HepG2 (cell line): ENCODE measurements at regions of chr1 and their contacts with region 1.

Region 1: GRCh38 chr1:31523769-31524168 is 52.5 kb upstream of the TINAGL1 start:
- DNase-seq: peak; percentile 32
- ATAC-seq: peak; percentile 87
- H3K4me3 ChIP-seq: peak overlapping the region in 1 of 3 experiments; percentile 20; a peak in 2 of 6 replicates
- H3K27ac ChIP-seq: peak overlapping the region; percentile 69
- H3K4me1 ChIP-seq: peaks cover 31% of the 10 kb centered on the region
- H3K27me3 ChIP-seq: no peaks in the 10 kb centered on the region
- CTCF ChIP-seq: no peak
- EP300 ChIP-seq: no peak; a peak in 1 of 4 replicates
- POLR2A ChIP-seq: no peak
- RAD21 ChIP-seq: no peak

Region 2: GRCh38 chr1:31505911-31506497 is 17.8 kb before region 1 on chr1:
- CTCF ChIA-PET with region 1: no interaction called
- POLR2A ChIA-PET with region 1: interaction called, 21 read pairs
- in situ Hi-C with region 1: no loop called
- intact Hi-C with region 1: no loop called
- DNase-seq: no peak
- ATAC-seq: no peak
- H3K4me3 ChIP-seq: no peak overlapping the region
- H3K27ac ChIP-seq: no peak overlapping the region
- H3K4me1 ChIP-seq: peaks cover 70% of the 10 kb centered on the region
- H3K27me3 ChIP-seq: no peaks in the 10 kb centered on the region
- CTCF ChIP-seq: no peak
- EP300 ChIP-seq: no peak
- POLR2A ChIP-seq: no peak
- RAD21 ChIP-seq: no peak

Region 3: GRCh38 chr1:31510841-31511803 is 12.6 kb before region 1 on chr1:
- CTCF ChIA-PET with region 1: no interaction called
- POLR2A ChIA-PET with region 1: interaction called, 21 read pairs
- in situ Hi-C with region 1: no loop called
- intact Hi-C with region 1: no loop called
- DNase-seq: peak; percentile 52
- ATAC-seq: peak; percentile 52
- H3K4me3 ChIP-seq: peak overlapping the region in 1 of 3 experiments; percentile 44; a peak in 2 of 6 replicates
- H3K27ac ChIP-seq: peak overlapping the region; percentile 98
- H3K4me1 ChIP-seq: peaks cover 97% of the 10 kb centered on the region
- H3K27me3 ChIP-seq: no peaks in the 10 kb centered on the region
- CTCF ChIP-seq: no peak
- EP300 ChIP-seq: 0 out of 4 replicates have a peak, but pooled peaks of 1 of the 2 experiments have one; percentile 43
- POLR2A ChIP-seq: peak in 1 of 2 experiments; percentile 49; a peak in 2 of 4 replicates
- RAD21 ChIP-seq: no peak

Region 4: DNA sequence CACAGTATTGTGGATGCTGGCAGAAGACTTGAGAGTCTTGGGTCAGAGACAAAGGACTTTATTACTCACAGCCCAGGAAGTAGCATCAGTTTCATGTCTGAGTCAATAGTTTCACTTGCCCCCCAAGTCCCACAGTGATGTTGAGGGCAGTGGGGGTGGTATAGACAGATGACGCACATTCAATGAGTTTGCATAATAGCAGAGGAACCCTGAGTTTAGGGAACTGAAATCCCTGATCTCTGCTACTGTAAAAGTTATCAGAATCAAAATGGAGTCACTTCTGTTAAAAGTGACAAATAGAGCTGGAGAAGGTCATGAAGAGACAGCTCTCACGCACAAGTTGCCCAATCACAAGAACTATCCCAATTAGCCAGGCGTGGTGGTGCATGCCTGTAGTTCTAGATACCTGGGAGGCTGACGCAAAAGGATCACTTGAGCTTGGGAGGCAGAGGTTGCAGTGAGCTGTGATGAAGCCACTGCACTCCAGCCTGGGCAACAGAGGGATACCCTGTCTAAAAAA is 82.2 kb after region 1 on chr1:
- CTCF ChIA-PET with region 1: no interaction called
- POLR2A ChIA-PET with region 1: no interaction called
- in situ Hi-C with region 1: no loop called
- intact Hi-C with region 1: no loop called
- DNase-seq: no peak
- ATAC-seq: no peak
- H3K4me3 ChIP-seq: no peak overlapping the region
- H3K27ac ChIP-seq: no peak overlapping the region
- H3K4me1 ChIP-seq: no peaks in the 10 kb centered on the region
- H3K27me3 ChIP-seq: peaks cover 0 to 23% of the 10 kb centered on the region in 2 experiments; a peak in 2 of 5 replicates
- CTCF ChIP-seq: no peak
- EP300 ChIP-seq: no peak
- POLR2A ChIP-seq: no peak
- RAD21 ChIP-seq: no peak